ENCODE measurements at regions of chr16 and their contacts with region 1.

Region 1: DNA sequence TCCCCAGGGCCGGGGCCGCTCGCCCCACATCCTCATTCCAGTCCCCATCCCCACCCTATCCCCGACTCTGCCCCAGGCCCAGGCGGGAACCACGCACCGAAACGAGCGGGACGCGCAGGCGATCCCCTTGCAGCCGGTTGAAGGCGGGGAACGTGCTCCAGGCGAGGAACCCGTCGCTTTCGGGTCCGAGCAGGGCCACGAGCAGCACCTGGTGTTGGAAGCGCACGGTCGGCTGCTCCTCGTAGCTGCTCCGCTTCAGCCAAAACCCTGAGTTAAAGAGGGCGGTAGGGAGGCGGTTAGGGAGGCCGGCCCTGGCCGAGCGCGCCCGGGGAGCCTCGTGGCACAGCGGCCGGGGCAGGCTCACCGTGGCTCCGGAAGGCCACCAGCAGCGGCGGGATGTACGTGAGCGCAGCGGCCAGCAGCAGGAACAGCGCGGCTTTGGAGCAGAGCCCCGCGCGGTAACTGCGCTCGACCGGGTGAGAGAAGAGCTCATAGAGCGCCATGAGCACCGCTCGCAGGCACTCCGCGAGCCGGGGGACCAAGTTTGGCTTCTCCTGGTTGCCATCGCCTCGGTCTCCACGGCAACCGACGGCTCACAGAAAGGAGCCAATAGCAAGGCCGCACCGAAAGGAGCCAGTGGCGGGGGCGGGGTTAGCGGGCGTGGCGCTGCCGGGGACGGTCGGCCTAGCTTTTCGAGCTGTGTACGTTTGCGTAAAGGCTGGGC is at the start of gene TMEM231:
- DNase-seq: peak; percentile 97
- H3K27ac ChIP-seq: peak within 1 kb of the TSS; percentile 86
- CTCF ChIP-seq: no peak

Region 2: DNA sequence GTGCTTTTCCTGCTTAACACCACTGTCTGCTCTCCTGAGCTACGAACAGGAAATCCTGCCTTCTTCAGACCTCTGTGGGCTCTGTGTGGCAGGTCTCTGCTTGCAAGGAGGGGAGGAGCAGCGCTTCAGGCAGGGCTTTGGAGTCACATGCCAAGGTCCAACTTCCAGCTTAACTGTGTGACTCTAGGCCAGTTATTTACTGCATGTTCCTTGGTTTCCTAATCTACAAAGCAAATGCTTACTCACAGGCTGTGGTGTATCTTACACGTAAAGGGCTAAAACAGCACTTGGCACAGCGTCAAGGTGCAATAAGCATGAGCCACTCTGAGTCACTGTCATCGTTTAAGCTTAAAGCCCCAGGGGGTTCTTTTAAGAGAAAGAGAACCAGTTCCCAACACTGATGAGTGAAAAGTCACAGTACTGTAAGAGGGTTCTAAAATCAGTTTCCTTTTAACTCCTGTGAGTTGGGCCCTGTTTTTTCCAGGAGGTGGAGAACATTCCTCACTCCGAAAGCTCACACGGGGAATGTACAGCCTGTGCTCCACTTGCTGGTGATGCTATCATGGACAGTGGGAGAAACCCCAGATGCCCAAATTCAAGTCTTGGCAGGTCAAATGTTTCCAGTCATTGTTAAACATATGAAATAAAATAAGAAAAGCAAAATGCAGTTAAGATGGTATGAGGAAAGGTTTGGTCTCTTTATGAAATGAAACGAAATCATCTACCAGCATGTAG is 250.3 kb before region 1 on chr16:
- CTCF ChIA-PET with region 1: no interaction called
- POLR2A ChIA-PET with region 1: no interaction called
- DNase-seq: peak; percentile 97
- H3K27ac ChIP-seq: peak overlapping the region; percentile 98
- CTCF ChIP-seq: no peak

Region 3: GRCh38 chr16:75527825-75528299 is 28.0 kb before region 1 on chr16:
- CTCF ChIA-PET with region 1: no interaction called
- POLR2A ChIA-PET with region 1: interaction called, 10 read pairs
- DNase-seq: no peak
- H3K27ac ChIP-seq: no peak overlapping the region
- CTCF ChIP-seq: no peak

Region 4: DNA sequence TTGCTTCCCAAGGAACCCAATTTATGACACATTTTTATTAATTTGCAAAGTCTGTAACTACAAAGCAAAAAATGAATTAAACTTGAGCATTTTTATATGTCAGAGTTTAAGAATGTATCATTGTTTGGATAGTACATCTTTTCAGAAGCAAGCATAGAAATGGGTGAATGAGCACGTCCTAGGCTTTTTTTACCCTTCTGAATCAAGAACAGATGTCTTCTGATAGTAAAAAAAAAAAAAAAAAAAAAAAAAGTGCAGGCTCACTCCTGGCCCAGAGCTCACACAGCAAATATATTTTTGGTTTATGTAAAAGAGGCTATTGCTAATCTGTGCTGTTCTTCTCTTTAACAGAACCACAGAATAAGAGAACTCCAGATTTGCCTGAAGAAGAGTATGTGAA is 98.1 kb after region 1 on chr16:
- CTCF ChIA-PET with region 1: no interaction called
- POLR2A ChIA-PET with region 1: interaction called, 12 read pairs
- DNase-seq: no peak
- H3K27ac ChIP-seq: no peak overlapping the region
- CTCF ChIP-seq: no peak